ENCODE measurements at regions of chr2 and their contacts with region 1.

Region 1: GRCh38 chr2:215870986-215871385 is 142.4 kb downstream of the MREG start:
- DNase-seq: peak; percentile 32 to 60 (median 38)
- ATAC-seq: peak; percentile 97
- H3K4me3 ChIP-seq: no peak overlapping the region
- H3K27ac ChIP-seq: no peak overlapping the region
- H3K4me1 ChIP-seq: peaks cover 0 to 12% of the 10 kb centered on the region in 2 experiments; a peak in 2 of 5 replicates
- H3K27me3 ChIP-seq: no peaks in the 10 kb centered on the region
- CTCF ChIP-seq: peak; percentile 56 to 66 (median 65)
- EP300 ChIP-seq: no peak
- POLR2A ChIP-seq: no peak
- RAD21 ChIP-seq: peak; percentile 32 to 73

Region 2: DNA sequence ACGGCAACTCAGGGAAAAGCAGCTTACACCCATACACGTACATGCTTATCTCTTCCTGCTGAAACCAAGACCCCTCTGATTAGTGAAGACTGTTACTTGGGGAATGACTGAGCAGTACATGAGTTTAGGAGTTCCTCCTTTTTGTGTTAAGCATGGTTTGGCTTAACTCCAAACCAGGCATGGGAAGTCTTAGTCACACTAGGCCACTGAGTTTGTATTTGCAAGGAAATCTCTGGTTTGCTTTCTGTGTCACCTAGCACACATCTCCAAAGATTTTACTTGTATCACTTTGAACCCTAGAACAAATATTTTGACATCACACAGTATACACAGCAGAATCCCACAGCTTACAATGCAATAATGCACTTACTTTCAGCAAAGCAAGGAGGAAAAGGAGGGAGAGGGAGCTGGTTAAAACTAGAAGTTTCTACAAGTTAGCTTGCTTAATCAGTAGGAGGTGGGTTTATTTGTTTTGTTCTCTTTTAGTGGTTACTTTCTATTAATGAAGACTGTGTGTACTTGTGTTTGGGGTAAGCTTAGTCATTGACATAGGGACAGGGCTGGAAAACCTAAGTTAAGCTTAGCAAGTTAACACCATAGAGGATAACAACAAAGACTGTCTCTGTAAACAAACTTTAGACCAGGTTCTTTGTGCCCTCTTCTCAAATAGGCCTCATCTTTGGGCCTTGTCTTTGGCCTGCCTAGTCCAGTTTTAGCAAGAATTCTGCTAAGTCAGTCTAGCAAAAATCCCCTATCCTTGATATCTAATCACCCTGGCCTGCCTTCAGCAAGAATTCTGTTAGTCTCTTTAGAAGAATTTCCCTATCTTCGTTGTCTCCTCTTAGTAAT is 77.0 kb before region 1 on chr2:
- CTCF ChIA-PET with region 1: no interaction called
- POLR2A ChIA-PET with region 1: no interaction called
- in situ Hi-C with region 1: no loop called
- intact Hi-C with region 1: loop called (anchors 2 kb)
- DNase-seq: peak; percentile 20 to 93 (median 47)
- ATAC-seq: peak; percentile 83
- H3K4me3 ChIP-seq: no peak overlapping the region
- H3K27ac ChIP-seq: peak overlapping the region; percentile 85
- H3K4me1 ChIP-seq: peaks cover 5 to 49% of the 10 kb centered on the region in 2 experiments; a peak in 4 of 5 replicates
- H3K27me3 ChIP-seq: no peaks in the 10 kb centered on the region
- CTCF ChIP-seq: no peak
- EP300 ChIP-seq: peak; percentile 89
- POLR2A ChIP-seq: no peak
- RAD21 ChIP-seq: 0 out of 4 replicates have a peak, but pooled peaks of 1 of the 2 experiments have one; percentile 16

Measured in K562 (cell line).